ENCODE measurements at regions of chr4 and their contacts with region 1.

Region 1: DNA sequence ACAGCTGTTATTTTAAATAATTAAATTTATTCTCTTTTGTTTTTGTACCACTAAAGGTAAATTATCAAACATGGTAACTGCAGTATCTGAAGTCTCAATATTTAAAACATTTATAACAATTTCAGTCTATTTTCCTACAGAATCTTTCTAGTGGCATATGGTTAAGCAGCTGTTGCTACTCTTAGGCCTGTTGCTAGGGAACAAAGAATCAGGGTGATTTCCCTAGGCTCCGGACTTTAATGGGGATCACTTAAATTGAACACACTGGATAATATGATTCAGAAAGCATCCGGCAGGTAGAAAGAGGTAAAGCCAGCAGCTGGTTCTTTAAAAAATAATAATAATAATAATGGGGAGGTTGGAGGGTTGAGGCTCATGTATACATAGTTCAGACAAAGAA is 17.6 kb downstream of the FBXO8 start:
- H3K4me3 Mint-ChIP-seq: no peak overlapping the region
- H3K27ac Mint-ChIP-seq: peak overlapping the region; percentile 66
- H3K4me1 Mint-ChIP-seq: peaks cover 2% of the 10 kb centered on the region
- H3K27me3 Mint-ChIP-seq: no peaks in the 10 kb centered on the region

Region 2: DNA sequence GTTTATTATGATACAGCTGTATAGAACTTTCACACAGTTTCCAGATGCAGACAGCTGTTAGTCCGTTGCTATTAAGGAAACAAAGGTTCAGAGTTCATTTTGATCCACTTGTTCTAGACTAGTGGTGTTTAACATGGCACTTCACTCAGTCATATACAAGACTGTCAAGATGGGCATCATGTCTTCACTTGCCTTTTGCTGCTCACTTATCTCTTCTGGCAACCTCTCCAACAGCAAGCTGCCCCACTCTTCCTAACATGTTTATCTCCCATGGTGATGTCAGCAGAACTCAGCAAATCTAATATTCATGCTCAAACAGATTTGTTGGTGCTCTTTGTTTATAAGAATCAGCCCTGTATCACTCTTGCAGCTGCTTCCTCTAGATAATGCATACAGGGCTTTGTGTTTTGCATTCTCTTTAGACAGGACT is 499.7 kb before region 1 on chr4:
- intact Hi-C with region 1: no loop called
- H3K4me3 Mint-ChIP-seq: no peak overlapping the region
- H3K27ac Mint-ChIP-seq: no peak overlapping the region
- H3K4me1 Mint-ChIP-seq: no peaks in the 10 kb centered on the region
- H3K27me3 Mint-ChIP-seq: no peaks in the 10 kb centered on the region

Region 3: DNA sequence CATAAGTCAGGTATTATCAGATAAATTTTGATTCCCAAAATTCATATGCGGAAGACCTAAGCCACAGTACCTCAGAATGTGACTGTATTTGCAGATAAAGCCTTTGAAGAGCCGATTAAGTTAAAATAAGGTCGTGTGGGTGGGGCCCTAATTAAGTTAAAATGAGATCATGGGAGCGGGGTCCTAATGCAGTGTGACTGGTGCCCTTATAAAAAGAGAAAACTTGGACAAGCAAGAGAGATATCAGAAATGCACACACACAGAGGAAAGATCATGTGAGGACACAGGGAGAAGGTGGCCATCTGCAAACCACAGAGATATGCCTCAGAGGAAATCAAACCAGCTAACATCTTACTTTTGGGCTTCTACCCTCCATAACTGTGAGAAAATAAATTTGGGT is 218.6 kb before region 1 on chr4:
- intact Hi-C with region 1: no loop called
- H3K4me3 Mint-ChIP-seq: no peak overlapping the region
- H3K27ac Mint-ChIP-seq: no peak overlapping the region
- H3K4me1 Mint-ChIP-seq: no peaks in the 10 kb centered on the region
- H3K27me3 Mint-ChIP-seq: peaks cover 4% of the 10 kb centered on the region

Region 4: DNA sequence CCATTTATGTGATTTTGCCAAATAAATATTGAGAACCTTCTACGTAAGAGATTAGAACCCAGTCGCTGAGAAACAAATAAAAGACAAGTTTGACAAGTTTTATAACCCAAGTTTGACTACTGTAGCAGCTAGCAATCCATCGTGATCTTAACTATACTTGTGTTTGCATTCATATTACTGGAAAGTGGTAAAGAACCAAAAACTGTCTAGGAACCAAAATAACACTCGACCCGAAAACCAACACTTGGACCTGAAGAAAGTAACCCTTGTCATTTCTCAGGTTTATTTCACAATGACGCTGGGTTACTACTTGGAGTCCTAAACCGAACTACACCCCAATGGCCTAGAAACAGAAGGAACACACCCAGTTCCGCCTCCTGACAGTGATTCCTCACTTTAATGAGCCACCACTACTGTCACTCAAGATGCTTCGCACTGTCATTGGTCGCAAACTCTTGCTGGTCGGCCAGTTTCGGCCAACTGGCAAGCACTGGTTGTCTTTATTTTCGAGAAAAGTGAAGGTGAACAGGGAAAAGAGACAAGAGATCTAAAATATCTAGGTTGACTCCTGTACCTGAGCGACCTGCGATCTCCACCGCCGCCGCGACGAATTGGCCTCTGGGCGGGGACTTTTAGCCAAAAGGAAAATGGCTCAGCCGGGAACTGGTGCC is 17.1 kb after region 1 on chr4:
- intact Hi-C with region 1: loop called (anchors 2 kb)
- H3K4me3 Mint-ChIP-seq: peak overlapping the region; percentile 93
- H3K27ac Mint-ChIP-seq: peak overlapping the region; percentile 100
- H3K4me1 Mint-ChIP-seq: peaks cover 47% of the 10 kb centered on the region
- H3K27me3 Mint-ChIP-seq: no peaks in the 10 kb centered on the region